T-cell (primary cell): ENCODE measurements at regions of chr7 and their contacts with region 1.

Region 1: GRCh38 chr7:138738551-138739335 is 37.6 kb upstream of the SVOPL start:
- DNase-seq: peak; percentile 66 to 90 (median 78)
- ATAC-seq: peak; percentile 87 to 96 (median 88)
- H3K4me3 ChIP-seq: no peak overlapping the region
- H3K4me3 Mint-ChIP-seq: no peak overlapping the region
- H3K27ac ChIP-seq: no peak overlapping the region
- H3K27ac Mint-ChIP-seq: no peak overlapping the region
- H3K4me1 ChIP-seq: no peaks in the 10 kb centered on the region
- H3K4me1 Mint-ChIP-seq: peaks cover 0 to 10% (median 9%) of the 10 kb centered on the region in 3 donors
- H3K27me3 ChIP-seq: no peaks in the 10 kb centered on the region
- H3K27me3 Mint-ChIP-seq: no peaks in the 10 kb centered on the region

Region 2: DNA sequence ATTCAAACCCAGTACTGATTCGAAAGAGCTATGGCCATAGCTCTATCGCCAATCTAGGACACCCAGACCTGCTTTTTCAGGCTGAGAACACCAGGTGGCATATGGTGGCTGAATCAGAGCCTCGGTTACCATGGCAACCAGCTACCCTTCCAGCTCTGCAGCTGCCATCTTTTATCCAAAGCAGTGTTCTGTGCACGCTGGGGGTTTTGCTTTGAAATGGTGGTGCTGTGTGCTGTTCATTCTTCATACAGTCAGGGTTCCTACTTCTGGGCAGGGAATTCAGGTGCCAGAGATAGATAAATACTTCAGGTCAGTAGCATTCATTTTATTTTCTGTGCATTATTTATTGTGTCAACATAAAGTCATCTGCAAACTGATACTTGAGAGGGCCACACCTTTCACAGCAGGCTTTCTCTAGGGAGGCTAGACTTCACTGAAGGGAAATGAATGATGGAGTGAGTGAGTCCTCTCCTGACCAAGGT is 577.1 kb before region 1 on chr7:
- CTCF ChIA-PET with region 1: interaction called, 23 to 95 read pairs
- POLR2A ChIA-PET with region 1: interaction called in 1 of 2 experiments, 10 read pairs
- DNase-seq: peak; percentile 22 to 92 (median 69)
- ATAC-seq: peak; percentile 89 to 98 (median 92)
- H3K4me3 ChIP-seq: no peak overlapping the region
- H3K4me3 Mint-ChIP-seq: no peak overlapping the region
- H3K27ac ChIP-seq: no peak overlapping the region
- H3K27ac Mint-ChIP-seq: no peak overlapping the region
- H3K4me1 ChIP-seq: no peaks in the 10 kb centered on the region
- H3K4me1 Mint-ChIP-seq: no peaks in the 10 kb centered on the region
- H3K27me3 ChIP-seq: peaks cover 0 to under 1% of the 10 kb centered on the region in 2 experiments
- H3K27me3 Mint-ChIP-seq: no peaks in the 10 kb centered on the region

Region 3: GRCh38 chr7:138752568-138753518 is 14.1 kb after region 1 on chr7:
- CTCF ChIA-PET with region 1: interaction called, 4 to 17 read pairs
- POLR2A ChIA-PET with region 1: no interaction called
- DNase-seq: peak; percentile 76 to 99 (median 95)
- ATAC-seq: peak; percentile 92 to 96 (median 92)
- H3K4me3 ChIP-seq: peak overlapping the region in 1 of 2 donors; percentile 15
- H3K4me3 Mint-ChIP-seq: peak overlapping the region; percentile 22 to 67 (median 57)
- H3K27ac ChIP-seq: peak overlapping the region; percentile 90
- H3K27ac Mint-ChIP-seq: peak overlapping the region; percentile 85 to 93
- H3K4me1 ChIP-seq: peaks cover 15 to 36% of the 10 kb centered on the region in 2 experiments
- H3K4me1 Mint-ChIP-seq: peaks cover 52 to 80% (median 77%) of the 10 kb centered on the region in 3 donors
- H3K27me3 ChIP-seq: peaks cover 0 to 3% of the 10 kb centered on the region in 2 experiments
- H3K27me3 Mint-ChIP-seq: no peaks in the 10 kb centered on the region